ENCODE measurements at regions of chr3 and their contacts with region 1.

Region 1: GRCh38 chr3:194682694-194683310 is 2.9 kb upstream of the FAM43A start:
- DNase-seq: peak; percentile 89
- H3K4me3 ChIP-seq: no peak overlapping the region
- H3K27ac ChIP-seq: peak overlapping the region; percentile 46
- H3K4me1 ChIP-seq: peaks cover 18% of the 10 kb centered on the region
- H3K27me3 ChIP-seq: no peaks in the 10 kb centered on the region
- CTCF ChIP-seq: peak; percentile 83 to 89
- POLR2A ChIP-seq: no peak

Region 2: GRCh38 chr3:194700241-194700640 is 17.4 kb after region 1 on chr3:
- CTCF ChIA-PET with region 1: no interaction called
- POLR2A ChIA-PET with region 1: no interaction called
- dilution Hi-C with region 1: no loop called
- intact Hi-C with region 1: no loop called
- DNase-seq: no peak
- H3K4me3 ChIP-seq: no peak overlapping the region
- H3K27ac ChIP-seq: no peak overlapping the region
- H3K4me1 ChIP-seq: no peaks in the 10 kb centered on the region
- H3K27me3 ChIP-seq: no peaks in the 10 kb centered on the region
- CTCF ChIP-seq: no peak
- POLR2A ChIP-seq: no peak

Region 3: GRCh38 chr3:194930377-194931204 is 247.8 kb after region 1 on chr3:
- CTCF ChIA-PET with region 1: interaction called, 28 read pairs
- POLR2A ChIA-PET with region 1: interaction called, 35 read pairs
- dilution Hi-C with region 1: no loop called
- intact Hi-C with region 1: loop called (anchors 1 kb)
- DNase-seq: peak; percentile 99
- H3K4me3 ChIP-seq: no peak overlapping the region
- H3K27ac ChIP-seq: peak overlapping the region; percentile 98
- H3K4me1 ChIP-seq: peaks cover 47% of the 10 kb centered on the region
- H3K27me3 ChIP-seq: no peaks in the 10 kb centered on the region
- CTCF ChIP-seq: no peak
- POLR2A ChIP-seq: peak; percentile 41

Region 4: DNA sequence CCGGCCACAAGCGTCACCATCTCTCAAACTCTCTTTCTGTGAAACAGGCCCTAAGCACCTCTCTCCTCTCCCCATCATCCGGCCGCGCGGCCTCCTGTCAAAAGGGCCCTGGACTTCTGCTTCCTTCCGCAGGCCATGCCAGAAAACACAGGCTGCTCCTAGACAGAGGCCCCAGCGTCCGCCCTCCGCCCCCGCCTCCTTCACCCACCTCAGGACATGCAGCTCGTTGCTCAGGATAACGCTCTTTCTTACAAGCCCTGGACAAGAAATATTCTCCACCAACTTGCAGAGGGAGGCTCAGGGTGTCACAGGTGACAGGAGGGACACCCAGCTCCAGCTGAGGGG is 376.2 kb after region 1 on chr3:
- CTCF ChIA-PET with region 1: interaction called, 3 read pairs
- POLR2A ChIA-PET with region 1: interaction called, 4 read pairs
- dilution Hi-C with region 1: no loop called
- intact Hi-C with region 1: loop called (anchors 1 kb)
- DNase-seq: peak; percentile 88
- H3K4me3 ChIP-seq: no peak overlapping the region
- H3K27ac ChIP-seq: peak overlapping the region; percentile 54
- H3K4me1 ChIP-seq: peaks cover 15% of the 10 kb centered on the region
- H3K27me3 ChIP-seq: no peaks in the 10 kb centered on the region
- CTCF ChIP-seq: no peak
- POLR2A ChIP-seq: peak; percentile 32

Region 5: DNA sequence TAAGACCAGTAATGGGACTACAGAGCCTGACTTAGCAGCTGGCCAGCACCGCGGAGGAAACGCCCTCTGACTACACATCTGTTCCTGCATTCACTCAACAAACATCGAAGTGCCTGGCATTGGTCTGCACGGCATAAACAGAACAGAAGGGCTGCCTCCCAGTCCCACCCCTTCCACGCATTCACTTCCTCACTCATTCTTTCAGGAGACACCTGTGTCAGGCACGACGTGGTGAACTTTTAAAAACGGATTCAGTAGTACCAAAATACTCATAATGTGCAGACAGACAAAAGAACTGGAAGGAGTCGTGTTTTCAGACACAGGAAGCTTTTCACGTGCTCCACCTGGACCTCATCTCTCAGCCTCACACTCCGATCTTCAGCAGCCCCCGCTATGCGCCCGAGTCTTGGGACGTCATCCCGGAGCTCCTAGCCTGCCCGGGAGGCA is 464.9 kb after region 1 on chr3:
- CTCF ChIA-PET with region 1: interaction called, 20 read pairs
- POLR2A ChIA-PET with region 1: interaction called, 14 read pairs
- dilution Hi-C with region 1: no loop called
- intact Hi-C with region 1: loop called (anchors 1 kb)
- DNase-seq: peak; percentile 91
- H3K4me3 ChIP-seq: peak overlapping the region in 2 of 3 experiments; percentile 43 to 50
- H3K27ac ChIP-seq: peak overlapping the region; percentile 95
- H3K4me1 ChIP-seq: peaks cover 53% of the 10 kb centered on the region
- H3K27me3 ChIP-seq: no peaks in the 10 kb centered on the region
- CTCF ChIP-seq: no peak
- POLR2A ChIP-seq: peak; percentile 83

Region 6: DNA sequence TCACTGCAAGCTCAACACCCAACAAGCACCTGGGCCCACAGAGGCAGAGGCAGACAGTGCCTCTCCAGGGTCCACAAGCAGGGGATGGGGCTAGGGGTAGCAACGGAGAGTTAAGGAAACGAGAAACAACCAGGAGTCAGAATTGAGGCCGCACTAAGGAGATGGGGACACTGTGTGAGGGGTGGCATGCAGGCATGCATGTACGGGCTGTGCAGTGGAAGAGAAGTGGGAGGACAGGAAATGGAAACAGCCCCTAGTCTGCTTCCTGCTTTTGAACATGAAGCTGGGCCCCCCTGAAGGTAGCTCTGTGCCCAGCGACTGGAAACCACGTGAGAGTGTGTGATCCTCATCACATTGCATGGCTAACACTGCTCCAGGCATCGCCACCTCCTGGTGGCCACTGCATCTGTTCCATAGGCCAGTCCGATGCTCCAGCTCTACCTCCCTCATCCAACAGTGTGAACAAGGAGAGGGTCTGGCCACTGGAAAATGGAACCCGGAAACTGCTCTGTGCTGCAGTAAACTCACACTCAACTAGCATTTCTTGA is 544.2 kb after region 1 on chr3:
- CTCF ChIA-PET with region 1: interaction called, 11 read pairs
- POLR2A ChIA-PET with region 1: no interaction called
- dilution Hi-C with region 1: no loop called
- intact Hi-C with region 1: no loop called
- DNase-seq: peak; percentile 46
- H3K4me3 ChIP-seq: no peak overlapping the region
- H3K27ac ChIP-seq: no peak overlapping the region
- H3K4me1 ChIP-seq: peaks cover 28% of the 10 kb centered on the region
- H3K27me3 ChIP-seq: no peaks in the 10 kb centered on the region
- CTCF ChIP-seq: peak; percentile 44 to 63
- POLR2A ChIP-seq: no peak

Region 7: GRCh38 chr3:195522254-195523023 is 839.6 kb after region 1 on chr3:
- CTCF ChIA-PET with region 1: interaction called, 7 read pairs
- POLR2A ChIA-PET with region 1: no interaction called
- dilution Hi-C with region 1: no loop called
- intact Hi-C with region 1: loop called (anchors 1 kb)
- DNase-seq: peak; percentile 38
- H3K4me3 ChIP-seq: no peak overlapping the region
- H3K27ac ChIP-seq: no peak overlapping the region
- H3K4me1 ChIP-seq: no peaks in the 10 kb centered on the region
- H3K27me3 ChIP-seq: no peaks in the 10 kb centered on the region
- CTCF ChIP-seq: peak; percentile 22 to 34
- POLR2A ChIP-seq: no peak

Measured in endothelial cell of umbilical vein (primary cell).